Calu3 (cell line): ENCODE measurements at regions of chr5 and their contacts with region 1.

Region 1: DNA sequence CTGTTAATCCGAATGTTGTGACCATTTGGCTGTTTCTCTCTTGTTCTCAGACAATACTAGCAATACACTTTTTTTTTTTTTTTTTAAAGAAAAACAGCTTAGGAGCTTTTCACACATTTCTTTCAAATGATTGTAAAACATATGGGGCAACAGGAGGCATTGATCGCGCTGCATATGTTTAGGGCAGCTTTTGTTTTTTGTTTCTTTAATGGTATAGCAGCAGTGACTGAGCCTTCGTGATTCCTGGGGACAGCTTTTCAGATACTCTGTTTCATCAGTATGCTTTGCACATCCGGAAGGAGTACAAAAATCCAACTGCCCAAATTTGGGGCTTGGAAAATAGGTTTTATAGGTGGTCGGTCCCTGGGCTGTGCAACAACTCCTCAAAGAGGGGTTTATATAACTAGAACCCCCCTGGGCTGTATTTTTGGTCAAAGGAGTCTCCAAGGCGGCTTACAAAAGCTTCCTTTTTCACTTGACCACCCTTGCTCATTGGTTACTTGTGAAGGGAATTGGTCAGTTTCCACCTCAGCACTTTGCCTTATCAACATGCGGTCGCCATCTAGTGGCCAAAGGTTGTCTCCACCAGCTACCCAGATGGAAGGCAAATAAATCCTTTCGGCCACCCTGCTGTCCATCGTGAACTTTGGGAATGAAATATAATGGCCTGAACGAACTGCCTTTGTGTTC is 91.8 kb downstream of the PDE6A start:
- DNase-seq: peak; percentile 79
- H3K4me3 Mint-ChIP-seq: no peak overlapping the region
- H3K27ac Mint-ChIP-seq: no peak overlapping the region
- H3K4me1 Mint-ChIP-seq: peaks cover 18% of the 10 kb centered on the region
- H3K27me3 Mint-ChIP-seq: no peaks in the 10 kb centered on the region
- CTCF ChIP-seq: peak; percentile 91

Region 2: DNA sequence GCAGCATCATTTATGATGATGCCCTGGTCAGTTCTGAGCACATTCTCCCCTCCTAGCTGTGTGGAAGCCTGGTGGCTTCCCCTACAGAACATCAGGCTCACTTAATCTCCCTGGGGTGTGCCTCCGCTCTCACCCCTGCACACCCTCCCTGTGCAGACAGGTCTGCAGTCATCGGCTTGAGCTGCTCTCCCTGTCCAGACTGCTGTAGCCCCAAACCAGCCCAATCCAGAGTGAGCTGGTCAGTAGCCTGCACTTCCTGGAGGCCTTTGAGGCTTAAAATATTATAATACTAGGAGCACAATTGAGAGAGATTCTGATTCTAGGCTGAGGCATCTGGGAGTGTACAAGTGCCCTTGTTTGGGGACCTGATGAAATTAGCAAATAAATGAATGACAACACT is 62.5 kb before region 1 on chr5:
- CTCF ChIA-PET with region 1: no interaction called
- intact Hi-C with region 1: no loop called
- DNase-seq: no peak
- H3K4me3 Mint-ChIP-seq: no peak overlapping the region
- H3K27ac Mint-ChIP-seq: no peak overlapping the region
- H3K4me1 Mint-ChIP-seq: peaks cover 10% of the 10 kb centered on the region
- H3K27me3 Mint-ChIP-seq: no peaks in the 10 kb centered on the region
- CTCF ChIP-seq: no peak

Region 3: GRCh38 chr5:149834246-149834855 is 18.4 kb before region 1 on chr5:
- CTCF ChIA-PET with region 1: interaction called, 20 read pairs
- intact Hi-C with region 1: no loop called
- DNase-seq: peak; percentile 79
- H3K4me3 Mint-ChIP-seq: no peak overlapping the region
- H3K27ac Mint-ChIP-seq: no peak overlapping the region
- H3K4me1 Mint-ChIP-seq: no peaks in the 10 kb centered on the region
- H3K27me3 Mint-ChIP-seq: no peaks in the 10 kb centered on the region
- CTCF ChIP-seq: peak; percentile 73

Region 4: GRCh38 chr5:149990518-149991376 is 138.0 kb after region 1 on chr5:
- CTCF ChIA-PET with region 1: interaction called, 11 read pairs
- intact Hi-C with region 1: loop called (anchors 1 kb)
- DNase-seq: peak; percentile 80
- H3K4me3 Mint-ChIP-seq: no peak overlapping the region
- H3K27ac Mint-ChIP-seq: peak overlapping the region; percentile 27
- H3K4me1 Mint-ChIP-seq: peaks cover 13% of the 10 kb centered on the region
- H3K27me3 Mint-ChIP-seq: no peaks in the 10 kb centered on the region
- CTCF ChIP-seq: peak; percentile 89